Heart left ventricle (tissue), 16 donors: ENCODE measurements at regions of chr2 and their contacts with region 1.

Region 1: GRCh38 chr2:177315364-177315763 is 50.8 kb upstream of the NFE2L2 start:
- DNase-seq: no peak
- ATAC-seq: no peak
- H3K4me3 ChIP-seq: no peak overlapping the region
- H3K27ac ChIP-seq: no peak overlapping the region
- H3K4me1 ChIP-seq: peaks cover 0 to 16% (median 4%) of the 10 kb centered on the region in 12 donors
- H3K27me3 ChIP-seq: no peaks in the 10 kb centered on the region
- CTCF ChIP-seq: no peak
- POLR2A ChIP-seq: no peak

Region 2: DNA sequence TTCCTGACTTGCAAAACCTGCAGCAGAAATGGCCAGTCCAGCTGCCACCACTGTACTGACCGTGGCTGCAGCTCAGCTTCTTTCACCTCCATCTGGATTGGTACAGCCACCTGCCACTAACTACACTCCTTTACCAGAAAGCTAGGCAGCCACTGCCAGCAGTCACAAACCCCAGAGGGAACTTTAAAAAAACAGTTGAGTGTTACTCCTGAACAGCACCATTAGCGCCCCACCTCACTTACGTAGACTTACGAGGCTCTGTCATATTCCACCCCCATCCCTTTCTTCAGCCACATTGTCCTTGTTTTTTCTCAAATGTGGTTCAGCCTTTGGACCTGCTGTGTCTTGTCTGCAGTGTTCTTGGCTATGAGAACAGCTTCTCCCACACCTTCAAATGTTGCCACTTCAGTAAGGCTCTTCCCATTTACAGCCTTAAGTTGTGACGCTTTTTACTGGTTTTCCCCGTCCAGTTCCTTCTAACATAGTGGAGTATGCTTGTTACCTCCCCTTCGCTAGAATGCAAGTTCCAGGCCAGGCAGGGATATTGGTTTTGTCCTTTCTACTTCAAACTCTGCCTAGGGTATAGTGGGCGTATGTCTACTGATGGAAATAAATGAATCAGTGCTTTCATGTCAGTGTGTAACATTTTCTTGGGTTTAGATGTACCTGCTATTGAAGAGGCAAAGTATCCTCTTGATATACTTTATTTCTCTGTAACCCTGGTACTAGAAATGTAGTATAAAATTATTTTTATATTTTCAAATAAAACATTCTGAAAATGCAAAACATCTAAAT is 85.7 kb before region 1 on chr2:
- intact Hi-C with region 1: no loop called
- DNase-seq: no peak
- ATAC-seq: peak in 2 of 4 donors; percentile 29
- H3K4me3 ChIP-seq: no peak overlapping the region
- H3K27ac ChIP-seq: peak overlapping the region in 1 of 12 donors; percentile 4
- H3K4me1 ChIP-seq: peaks cover 0 to 38% (median 10%) of the 10 kb centered on the region in 12 donors
- H3K27me3 ChIP-seq: no peaks in the 10 kb centered on the region
- CTCF ChIP-seq: no peak
- POLR2A ChIP-seq: no peak

Region 3: DNA sequence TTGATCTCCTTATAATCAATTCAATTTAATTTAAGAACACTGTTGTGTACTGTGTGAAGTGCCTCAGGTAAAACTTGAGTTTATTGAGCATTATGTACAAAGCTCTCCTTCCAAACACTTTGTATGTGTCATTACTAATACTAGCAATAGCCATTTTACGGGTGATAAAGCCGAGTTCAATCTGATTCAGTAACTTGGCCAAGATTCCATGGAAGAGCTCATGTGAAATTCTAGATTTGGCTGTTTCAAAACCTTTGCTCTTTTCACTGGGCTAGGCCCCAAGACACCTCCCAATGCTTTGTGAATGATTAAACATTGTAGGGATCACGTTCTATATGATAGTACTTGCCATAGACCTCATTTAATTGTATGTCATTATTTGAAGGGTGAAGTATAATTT is 42.0 kb before region 1 on chr2:
- intact Hi-C with region 1: loop called in 1 of 10 experiments (anchors 5 kb)
- DNase-seq: no peak
- ATAC-seq: peak in 1 of 4 donors; percentile 16
- H3K4me3 ChIP-seq: no peak overlapping the region
- H3K27ac ChIP-seq: peak overlapping the region in 1 of 12 donors; percentile 13
- H3K4me1 ChIP-seq: peaks cover 0 to 24% (median 0%) of the 10 kb centered on the region in 12 donors
- H3K27me3 ChIP-seq: no peaks in the 10 kb centered on the region
- CTCF ChIP-seq: no peak
- POLR2A ChIP-seq: no peak